MCF 10A (cell line): ENCODE measurements at regions of chr6 and their contacts with region 1.

Region 1: DNA sequence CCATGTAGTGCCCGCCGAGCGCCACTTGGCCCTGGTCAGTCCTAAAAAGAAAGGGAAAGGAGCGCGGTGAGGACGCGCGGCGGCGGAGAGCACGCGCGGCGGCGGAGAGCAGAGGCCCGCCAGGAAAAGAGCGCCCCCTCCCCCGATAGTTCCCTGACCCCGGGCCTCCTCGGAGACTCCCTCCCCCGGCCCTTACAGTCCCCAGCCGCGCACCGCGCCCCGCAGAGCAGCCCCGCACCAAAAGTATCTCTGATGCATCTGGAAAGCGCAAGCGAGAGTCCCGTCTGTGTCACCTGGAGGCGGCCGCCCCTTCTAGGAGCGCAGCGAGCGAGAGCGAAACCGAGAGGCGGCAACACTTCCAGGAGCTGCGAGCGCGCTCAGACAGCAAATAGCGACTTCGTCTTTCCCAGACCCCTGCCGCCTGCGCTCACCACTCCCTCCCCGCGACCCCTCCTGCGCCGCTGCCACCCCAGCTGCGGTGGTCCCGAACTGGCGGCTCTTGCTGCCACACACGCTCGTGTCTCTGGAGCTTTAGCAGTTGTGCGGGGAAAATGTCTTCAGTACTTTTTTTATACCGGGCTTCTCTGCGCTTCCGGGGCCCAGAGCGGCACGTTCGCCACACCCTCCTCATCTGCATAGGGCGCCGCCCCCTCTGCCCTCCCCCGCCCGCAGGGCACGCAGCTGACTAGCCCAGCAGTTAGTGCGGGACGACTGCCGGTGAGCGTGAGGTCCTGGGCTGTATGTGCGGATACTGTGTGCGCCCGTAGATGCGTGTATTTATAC is at the start of gene TENT5A:
- DNase-seq: peak; percentile 90
- H3K4me3 Mint-ChIP-seq: peak within 1 kb of the TSS; percentile 98
- H3K27ac Mint-ChIP-seq: peak within 1 kb of the TSS; percentile 88
- H3K4me1 Mint-ChIP-seq: peaks cover 18% of the 10 kb centered on the region
- H3K27me3 Mint-ChIP-seq: no peaks in the 10 kb centered on the region
- CTCF ChIP-seq: no peak
- total RNA-seq, gene TENT5A: 2.5 and 3.9 TPM in 2 replicates

Region 2: DNA sequence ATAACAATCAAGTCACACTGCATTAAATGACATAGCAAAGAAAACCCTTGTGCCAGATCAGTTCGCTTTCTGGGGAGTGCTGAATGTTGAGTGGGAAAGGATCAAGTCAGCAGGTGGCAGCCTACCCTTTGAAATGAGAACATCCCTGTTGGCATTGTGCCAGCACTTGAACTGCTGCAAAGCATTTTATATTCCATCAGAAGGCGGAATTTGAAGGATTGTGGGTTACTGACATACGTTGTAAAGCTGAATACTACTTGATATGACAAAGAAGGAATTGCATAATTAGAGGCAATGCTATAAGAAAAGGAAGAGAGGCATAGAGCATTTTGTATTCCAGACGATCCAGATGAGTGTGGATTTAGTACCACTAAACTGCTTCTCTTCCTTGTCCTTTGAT is 1619.3 kb before region 1 on chr6:
- CTCF ChIA-PET with region 1: no interaction called
- POLR2A ChIA-PET with region 1: no interaction called
- intact Hi-C with region 1: loop called (anchors 5 kb)
- DNase-seq: peak; percentile 75
- H3K4me3 Mint-ChIP-seq: no peak overlapping the region
- H3K27ac Mint-ChIP-seq: no peak overlapping the region
- H3K4me1 Mint-ChIP-seq: peaks cover 18% of the 10 kb centered on the region
- H3K27me3 Mint-ChIP-seq: no peaks in the 10 kb centered on the region
- CTCF ChIP-seq: peak; percentile 70

Region 3: GRCh38 chr6:80742481-80742880 is 1009.8 kb before region 1 on chr6:
- CTCF ChIA-PET with region 1: interaction called, 4 read pairs
- POLR2A ChIA-PET with region 1: no interaction called
- intact Hi-C with region 1: loop called (anchors 5 kb)
- DNase-seq: peak; percentile 47
- H3K4me3 Mint-ChIP-seq: no peak overlapping the region
- H3K27ac Mint-ChIP-seq: no peak overlapping the region
- H3K4me1 Mint-ChIP-seq: no peaks in the 10 kb centered on the region
- H3K27me3 Mint-ChIP-seq: no peaks in the 10 kb centered on the region
- CTCF ChIP-seq: peak; percentile 58

Region 4: DNA sequence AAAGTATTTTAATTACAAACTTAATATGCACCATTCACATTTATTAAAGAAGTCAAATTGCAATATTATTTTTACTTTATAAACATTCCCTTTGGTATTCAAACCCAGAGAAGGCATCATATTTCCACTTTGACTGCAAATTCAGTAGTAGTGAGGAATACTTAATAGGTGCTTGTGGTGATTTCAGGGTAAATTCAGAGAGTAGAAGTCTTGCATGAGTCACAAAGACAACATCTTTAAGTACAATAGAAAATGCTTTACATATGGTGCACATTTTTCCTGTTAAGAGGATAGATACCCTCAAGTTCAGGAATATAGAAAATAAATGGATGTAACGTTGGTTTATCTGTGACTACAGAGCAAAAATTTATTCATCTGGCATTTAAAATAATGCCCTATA is 390.1 kb before region 1 on chr6:
- CTCF ChIA-PET with region 1: no interaction called
- POLR2A ChIA-PET with region 1: no interaction called
- intact Hi-C with region 1: no loop called
- DNase-seq: peak; percentile 30
- H3K4me3 Mint-ChIP-seq: no peak overlapping the region
- H3K27ac Mint-ChIP-seq: no peak overlapping the region
- H3K4me1 Mint-ChIP-seq: no peaks in the 10 kb centered on the region
- H3K27me3 Mint-ChIP-seq: no peaks in the 10 kb centered on the region
- CTCF ChIP-seq: no peak

Region 5: DNA sequence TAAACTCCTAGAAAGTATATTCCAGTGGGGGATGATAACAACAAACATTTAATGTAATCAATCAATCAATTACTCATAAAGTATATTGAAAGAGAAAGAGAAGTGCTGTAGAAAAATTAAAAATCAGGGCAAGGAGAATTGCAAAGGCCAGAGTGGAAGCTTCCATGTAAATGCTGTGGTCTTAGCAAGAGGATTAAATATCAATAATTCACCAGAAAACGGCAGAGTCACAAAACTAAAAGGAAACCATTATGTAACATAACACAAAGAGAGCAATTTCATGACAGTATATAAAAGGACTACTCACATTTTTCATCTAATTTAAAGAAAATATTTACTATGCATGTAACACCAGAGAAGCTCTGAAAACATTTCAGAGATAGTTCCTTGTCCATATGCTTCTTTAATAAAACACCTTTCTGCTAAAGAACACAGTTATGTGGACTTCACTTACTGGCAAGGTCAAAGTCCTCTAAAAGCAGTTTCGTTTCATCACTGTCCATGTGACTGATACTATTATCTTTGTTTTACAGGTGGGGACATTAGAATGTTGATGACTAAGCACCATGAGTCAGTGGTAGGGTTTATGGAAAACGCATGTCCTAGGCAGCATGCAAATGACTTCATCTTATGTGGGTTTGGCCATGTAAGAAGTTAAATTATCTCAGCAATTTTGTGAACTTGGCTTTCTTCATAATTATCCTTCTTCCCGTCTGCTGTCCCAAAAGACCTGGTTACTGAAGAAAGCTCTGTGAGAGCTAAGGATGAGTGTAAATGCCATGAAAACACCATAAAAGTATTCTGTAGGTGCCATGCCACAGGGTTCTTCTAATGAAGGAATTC is 185.9 kb after region 1 on chr6:
- CTCF ChIA-PET with region 1: no interaction called
- POLR2A ChIA-PET with region 1: interaction called, 24 read pairs
- intact Hi-C with region 1: loop called (anchors 10 kb)
- DNase-seq: peak; percentile 89
- H3K4me3 Mint-ChIP-seq: no peak overlapping the region
- H3K27ac Mint-ChIP-seq: peak overlapping the region; percentile 80
- H3K4me1 Mint-ChIP-seq: peaks cover 28% of the 10 kb centered on the region
- H3K27me3 Mint-ChIP-seq: no peaks in the 10 kb centered on the region
- CTCF ChIP-seq: no peak

Region 6: DNA sequence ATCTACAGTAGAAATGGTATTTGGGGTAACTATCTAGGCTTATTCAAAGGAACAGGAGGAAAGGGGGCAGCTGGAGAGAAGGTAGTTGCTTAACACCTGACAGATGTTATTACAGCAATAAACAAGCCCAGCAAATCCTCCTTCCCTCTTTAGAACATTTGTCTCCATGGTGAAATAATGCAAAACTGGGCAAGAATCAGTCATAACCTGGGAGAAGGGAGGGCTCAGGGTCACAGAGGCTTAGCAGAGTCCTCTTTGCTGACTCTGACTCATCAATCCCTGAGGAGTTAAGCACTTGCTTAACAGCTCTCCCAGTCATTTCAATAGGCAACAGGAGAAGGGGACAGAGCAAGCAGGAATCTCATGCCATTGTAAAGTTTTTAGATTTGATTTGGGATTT is 265.0 kb after region 1 on chr6:
- CTCF ChIA-PET with region 1: interaction called, 5 read pairs
- POLR2A ChIA-PET with region 1: interaction called, 19 read pairs
- intact Hi-C with region 1: no loop called
- DNase-seq: peak; percentile 98
- H3K4me3 Mint-ChIP-seq: peak overlapping the region; percentile 54
- H3K27ac Mint-ChIP-seq: peak overlapping the region; percentile 99
- H3K4me1 Mint-ChIP-seq: peaks cover 50% of the 10 kb centered on the region
- H3K27me3 Mint-ChIP-seq: no peaks in the 10 kb centered on the region
- CTCF ChIP-seq: no peak

Region 7: GRCh38 chr6:82040405-82041221 is 288.3 kb after region 1 on chr6:
- CTCF ChIA-PET with region 1: interaction called, 5 read pairs
- POLR2A ChIA-PET with region 1: interaction called, 5 read pairs
- intact Hi-C with region 1: loop called (anchors 1 kb)
- DNase-seq: peak; percentile 71
- H3K4me3 Mint-ChIP-seq: no peak overlapping the region
- H3K27ac Mint-ChIP-seq: no peak overlapping the region
- H3K4me1 Mint-ChIP-seq: no peaks in the 10 kb centered on the region
- H3K27me3 Mint-ChIP-seq: no peaks in the 10 kb centered on the region
- CTCF ChIP-seq: peak; percentile 72